ENCODE measurements at regions of chr19 and their contacts with region 1.

Region 1: GRCh38 chr19:20359933-20360720 is 193.1 kb downstream of the ZNF486 start:
- DNase-seq: peak; percentile 6
- ATAC-seq: no peak
- H3K4me3 Mint-ChIP-seq: no peak overlapping the region
- H3K27ac Mint-ChIP-seq: no peak overlapping the region
- H3K4me1 Mint-ChIP-seq: no peaks in the 10 kb centered on the region
- H3K27me3 Mint-ChIP-seq: no peaks in the 10 kb centered on the region

Region 2: GRCh38 chr19:20124879-20125278 is 235.2 kb before region 1 on chr19:
- CTCF ChIA-PET with region 1: no interaction called
- POLR2A ChIA-PET with region 1: interaction called, 11 read pairs
- intact Hi-C with region 1: no loop called
- DNase-seq: no peak
- ATAC-seq: no peak
- H3K4me3 Mint-ChIP-seq: no peak overlapping the region
- H3K27ac Mint-ChIP-seq: no peak overlapping the region
- H3K4me1 Mint-ChIP-seq: no peaks in the 10 kb centered on the region
- H3K27me3 Mint-ChIP-seq: no peaks in the 10 kb centered on the region

Region 3: GRCh38 chr19:20315543-20315942 is 44.6 kb before region 1 on chr19:
- CTCF ChIA-PET with region 1: no interaction called
- POLR2A ChIA-PET with region 1: no interaction called
- intact Hi-C with region 1: no loop called
- DNase-seq: no peak
- ATAC-seq: no peak
- H3K4me3 Mint-ChIP-seq: no peak overlapping the region
- H3K27ac Mint-ChIP-seq: no peak overlapping the region
- H3K4me1 Mint-ChIP-seq: no peaks in the 10 kb centered on the region
- H3K27me3 Mint-ChIP-seq: no peaks in the 10 kb centered on the region

Region 4: DNA sequence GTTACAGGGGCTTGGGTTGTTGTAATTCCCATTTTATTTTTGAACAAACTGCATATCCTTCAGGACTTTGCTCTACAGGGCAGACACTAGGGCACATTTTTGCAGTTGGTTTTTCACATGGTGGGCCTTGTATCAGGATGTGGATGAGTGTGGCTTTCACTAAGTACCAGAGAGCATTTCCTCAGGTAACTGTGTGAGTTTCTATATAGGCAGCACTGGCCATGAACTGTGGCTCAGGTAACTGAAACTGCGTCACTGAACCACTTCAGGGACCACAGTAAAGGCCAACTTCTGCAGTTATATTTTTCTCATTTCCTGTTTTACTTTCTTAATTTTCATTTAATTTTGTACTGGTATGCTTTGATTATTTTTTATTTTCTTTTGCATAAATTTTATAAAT is 26.6 kb before region 1 on chr19:
- CTCF ChIA-PET with region 1: no interaction called
- POLR2A ChIA-PET with region 1: no interaction called
- intact Hi-C with region 1: no loop called
- DNase-seq: no peak
- ATAC-seq: no peak
- H3K4me3 Mint-ChIP-seq: no peak overlapping the region
- H3K27ac Mint-ChIP-seq: no peak overlapping the region
- H3K4me1 Mint-ChIP-seq: no peaks in the 10 kb centered on the region
- H3K27me3 Mint-ChIP-seq: no peaks in the 10 kb centered on the region